Left ventricle myocardium superior (tissue), 1 donor: ENCODE measurements at regions of chr10 and their contacts with region 1.

Region 1: GRCh38 chr10:114103284-114103683 is 59.6 kb downstream of the ADRB1 start:
- DNase-seq: no peak
- ATAC-seq: peak; percentile 74

Region 2: GRCh38 chr10:113802997-113803396 is 300.3 kb before region 1 on chr10:
- intact Hi-C with region 1: loop called (anchors 5 kb)
- DNase-seq: no peak
- ATAC-seq: no peak

Region 3: DNA sequence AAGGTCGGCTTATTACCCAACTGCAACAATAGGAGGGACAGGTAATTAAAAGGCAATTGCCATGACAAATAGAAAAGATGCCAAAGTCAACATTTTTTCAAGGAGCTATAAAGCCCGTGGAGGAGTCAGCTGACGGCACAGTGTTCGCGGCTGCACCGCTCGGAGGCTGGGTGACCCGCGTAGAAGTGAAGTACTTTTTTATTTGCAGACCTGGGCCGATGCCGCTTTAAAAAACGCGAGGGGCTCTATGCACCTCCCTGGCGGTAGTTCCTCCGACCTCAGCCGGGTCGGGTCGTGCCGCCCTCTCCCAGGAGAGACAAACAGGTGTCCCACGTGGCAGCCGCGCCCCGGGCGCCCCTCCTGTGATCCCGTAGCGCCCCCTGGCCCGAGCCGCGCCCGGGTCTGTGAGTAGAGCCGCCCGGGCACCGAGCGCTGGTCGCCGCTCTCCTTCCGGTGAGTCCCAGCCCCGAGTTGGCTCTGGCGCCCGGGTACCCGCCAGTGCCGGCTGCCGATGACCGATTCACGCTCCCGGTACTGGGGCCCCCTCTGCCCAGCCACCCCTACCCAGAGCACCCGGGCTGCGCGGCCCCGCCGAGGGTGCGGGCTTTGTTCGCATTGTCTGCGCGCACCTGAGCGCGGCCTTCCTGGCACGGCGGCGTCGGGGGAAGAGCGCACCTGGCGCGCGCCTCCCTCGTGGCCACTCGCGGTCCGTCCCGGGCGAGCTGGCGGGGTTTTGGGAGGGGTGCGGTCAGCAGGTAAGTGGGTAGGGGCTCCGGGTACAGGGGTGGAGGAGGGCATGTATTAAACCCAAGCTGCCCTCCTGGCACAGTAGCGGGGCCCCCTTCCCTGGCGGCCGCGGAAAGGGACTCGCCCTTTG is 136.1 kb after region 1 on chr10 and contains the start of gene VWA2:
- intact Hi-C with region 1: no loop called
- DNase-seq: peak; percentile 67
- ATAC-seq: peak; percentile 87
- total RNA-seq, gene VWA2: not detected